GM23248 (cell line): ENCODE measurements at regions of chr12 and their contacts with region 1.

Region 1: DNA sequence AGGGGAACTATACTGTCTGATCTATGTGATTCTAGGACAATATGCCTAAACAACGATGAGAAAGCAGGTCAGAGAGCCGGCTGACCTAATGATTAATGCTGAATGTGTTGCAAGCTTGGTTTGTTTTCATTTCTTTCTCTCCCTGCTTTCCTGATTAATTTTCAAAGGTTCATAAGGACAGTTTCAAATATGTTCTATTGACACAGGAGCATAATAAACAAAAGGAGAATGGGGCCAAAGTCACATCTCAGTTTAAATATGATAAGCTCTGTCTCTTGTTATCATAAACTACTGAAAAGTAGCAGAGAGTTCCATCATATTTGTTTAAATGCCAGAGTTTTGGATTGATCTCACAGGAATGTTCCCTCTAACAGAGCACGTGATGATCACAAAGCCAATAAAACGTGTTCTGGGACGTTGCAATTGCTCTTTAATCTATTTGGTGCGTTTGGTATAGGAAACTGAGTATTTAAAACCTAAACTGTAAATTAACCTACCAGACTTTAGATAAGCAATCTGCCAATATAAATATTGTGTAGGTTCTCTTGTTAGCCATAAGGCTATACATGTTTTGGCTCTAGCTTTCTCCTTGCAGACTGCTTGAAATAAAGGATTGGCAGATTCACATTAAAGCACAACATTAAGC is 3.7 kb upstream of the HSD17B6 start:
- DNase-seq: peak; percentile 4
- H3K4me3 ChIP-seq: no peak overlapping the region
- H3K27ac ChIP-seq: no peak overlapping the region
- H3K4me1 ChIP-seq: no peaks in the 10 kb centered on the region
- H3K27me3 ChIP-seq: no peaks in the 10 kb centered on the region

Region 2: DNA sequence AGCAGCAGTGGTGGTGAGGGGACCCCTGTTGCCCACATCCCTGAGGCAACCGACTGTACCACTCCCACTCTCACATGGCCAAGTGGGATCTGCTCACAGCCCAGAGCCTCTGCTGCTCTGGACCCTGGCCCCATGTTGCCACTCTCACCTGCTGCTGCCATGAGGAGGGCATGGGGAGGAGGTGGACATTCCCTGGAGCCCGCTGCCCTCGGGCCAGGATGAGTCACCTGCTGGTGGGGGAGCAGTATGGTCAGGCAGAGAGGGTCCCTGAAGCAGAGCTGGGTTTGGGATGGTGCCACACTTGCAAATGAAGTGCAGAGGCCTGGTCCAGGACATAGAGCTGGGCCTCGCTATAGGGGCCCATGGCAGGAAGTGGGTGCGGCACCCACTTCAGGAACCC is 148.8 kb after region 1 on chr12:
- in situ Hi-C with region 1: no loop called
- DNase-seq: no peak
- H3K4me3 ChIP-seq: no peak overlapping the region
- H3K27ac ChIP-seq: no peak overlapping the region
- H3K4me1 ChIP-seq: no peaks in the 10 kb centered on the region
- H3K27me3 ChIP-seq: peaks cover 9% of the 10 kb centered on the region; the same call in 1 of the 2 replicates

Region 3: DNA sequence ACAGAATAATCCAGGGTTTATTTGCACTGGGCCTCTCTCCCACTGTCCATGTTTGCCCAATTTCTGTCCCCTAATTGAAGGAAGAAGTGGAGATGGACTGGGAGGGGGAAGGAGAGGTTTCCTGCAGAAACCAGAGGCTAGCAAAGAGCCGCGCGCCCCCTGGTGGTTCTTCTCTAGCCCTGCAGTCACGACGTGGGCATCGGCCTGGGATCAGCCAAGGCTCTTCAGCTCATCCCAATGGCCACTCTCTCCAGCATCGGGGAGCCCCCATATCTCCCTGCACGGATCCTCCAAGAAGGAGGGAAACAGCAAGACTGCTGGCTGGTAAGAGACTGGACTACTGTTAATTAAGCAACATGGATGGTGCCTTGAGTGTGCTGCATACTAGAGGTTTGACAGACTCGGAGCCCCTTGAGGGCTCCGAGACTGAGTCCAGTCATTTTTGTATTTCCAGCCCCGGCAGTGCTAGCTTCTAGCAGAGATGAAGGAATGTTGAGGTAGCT is 228.2 kb after region 1 on chr12:
- in situ Hi-C with region 1: loop called (anchors 5 kb)
- DNase-seq: peak; percentile 84
- H3K4me3 ChIP-seq: no peak overlapping the region
- H3K27ac ChIP-seq: no peak overlapping the region
- H3K4me1 ChIP-seq: no peaks in the 10 kb centered on the region
- H3K27me3 ChIP-seq: no peaks in the 10 kb centered on the region; the same call in 1 of the 2 replicates